Right lobe of liver (tissue), 6 donors: ENCODE measurements at regions of chr16 and their contacts with region 1.

Region 1: DNA sequence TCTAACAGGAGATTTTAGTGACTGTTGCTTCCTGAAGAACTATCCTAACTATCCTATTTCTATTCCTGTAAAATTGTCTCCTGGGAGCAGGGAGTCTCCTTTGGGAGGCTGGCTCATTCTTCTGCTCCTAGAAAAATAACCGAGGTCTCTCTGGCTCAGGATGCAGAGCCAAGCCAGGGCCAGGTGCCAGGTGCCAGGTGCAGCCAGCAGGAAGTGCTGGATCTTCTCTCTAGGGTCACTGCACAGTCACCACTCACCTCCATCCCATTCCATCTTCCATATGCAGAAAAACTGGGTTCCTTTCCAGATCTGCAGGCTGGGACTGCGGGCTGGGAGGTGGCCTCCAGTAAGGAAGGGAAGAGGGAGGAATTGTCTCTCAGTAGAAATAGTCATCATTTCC is 3.8 kb upstream of the TMC7 start:
- DNase-seq: no peak
- ATAC-seq: no peak
- H3K4me3 ChIP-seq: no peak overlapping the region
- H3K27ac ChIP-seq: no peak overlapping the region
- H3K4me1 ChIP-seq: no peaks in the 10 kb centered on the region
- H3K27me3 ChIP-seq: no peaks in the 10 kb centered on the region
- CTCF ChIP-seq: no peak
- POLR2A ChIP-seq: no peak

Region 2: GRCh38 chr16:19071811-19072777 is 92.2 kb after region 1 on chr16:
- intact Hi-C with region 1: loop called in 1 of 2 experiments (anchors 5 kb)
- DNase-seq: peak in 2 of 3 donors; percentile 54 to 68
- ATAC-seq: peak; percentile 20 to 29 (median 26)
- H3K4me3 ChIP-seq: no peak overlapping the region
- H3K27ac ChIP-seq: no peak overlapping the region
- H3K4me1 ChIP-seq: peaks cover 0 to 13% (median 0%) of the 10 kb centered on the region in 4 donors
- H3K27me3 ChIP-seq: no peaks in the 10 kb centered on the region
- CTCF ChIP-seq: peak; percentile 54 to 78 (median 74)
- POLR2A ChIP-seq: no peak

Region 3: GRCh38 chr16:19366391-19366790 is 386.5 kb after region 1 on chr16:
- intact Hi-C with region 1: no loop called
- DNase-seq: no peak
- ATAC-seq: no peak
- H3K4me3 ChIP-seq: no peak overlapping the region
- H3K27ac ChIP-seq: no peak overlapping the region
- H3K4me1 ChIP-seq: no peaks in the 10 kb centered on the region
- H3K27me3 ChIP-seq: no peaks in the 10 kb centered on the region
- CTCF ChIP-seq: no peak
- POLR2A ChIP-seq: no peak